Right ventricle myocardium superior (tissue), 1 donor: ENCODE measurements at regions of chr4 and their contacts with region 1.

Region 1: GRCh38 chr4:184538023-184538599 is 63.8 kb upstream of the IRF2 start:
- DNase-seq: peak; percentile 94
- ATAC-seq: peak; percentile 93

Region 2: DNA sequence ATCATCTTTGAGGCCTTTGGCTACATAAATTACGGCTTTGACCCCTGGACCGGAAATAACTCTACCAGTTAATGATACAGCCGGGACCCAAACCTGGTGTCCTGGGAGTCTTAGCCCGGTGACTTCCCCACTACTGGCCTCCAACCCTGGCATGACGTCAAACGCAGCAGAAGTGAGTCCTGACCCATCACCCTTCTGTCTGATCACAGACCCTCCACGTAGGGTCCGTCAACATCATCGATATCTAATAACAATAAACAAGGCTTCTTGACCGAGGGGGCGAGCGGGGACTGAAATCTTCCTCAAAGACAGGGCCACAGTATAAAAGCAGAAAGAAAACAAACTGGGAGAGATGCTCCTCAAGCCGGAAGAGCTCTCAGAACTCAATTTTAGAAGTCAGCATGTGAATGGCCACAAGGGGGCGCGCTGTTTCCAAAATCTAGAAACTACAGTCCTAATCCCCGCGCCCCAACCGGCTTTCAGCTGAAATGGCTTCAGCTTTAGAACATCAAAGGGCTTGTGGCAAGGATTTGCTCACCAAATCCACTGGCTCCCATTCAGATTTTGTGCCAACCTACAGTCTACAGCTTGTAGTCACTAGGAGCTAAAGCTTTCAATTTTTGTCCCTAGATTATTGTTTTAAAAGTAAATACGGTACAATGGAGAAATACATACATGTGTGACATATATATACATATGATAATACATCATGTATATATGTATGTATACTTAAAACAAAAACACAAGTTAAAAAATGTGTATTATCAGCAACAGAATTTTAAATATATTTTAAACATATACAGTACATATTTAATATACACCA is 274.0 kb before region 1 on chr4:
- intact Hi-C with region 1: loop called (anchors 2 kb)
- DNase-seq: peak; percentile 95
- ATAC-seq: peak; percentile 90

Region 3: GRCh38 chr4:184282251-184282713 is 255.8 kb before region 1 on chr4:
- intact Hi-C with region 1: loop called (anchors 5 kb)
- DNase-seq: no peak
- ATAC-seq: peak; percentile 51

Region 4: DNA sequence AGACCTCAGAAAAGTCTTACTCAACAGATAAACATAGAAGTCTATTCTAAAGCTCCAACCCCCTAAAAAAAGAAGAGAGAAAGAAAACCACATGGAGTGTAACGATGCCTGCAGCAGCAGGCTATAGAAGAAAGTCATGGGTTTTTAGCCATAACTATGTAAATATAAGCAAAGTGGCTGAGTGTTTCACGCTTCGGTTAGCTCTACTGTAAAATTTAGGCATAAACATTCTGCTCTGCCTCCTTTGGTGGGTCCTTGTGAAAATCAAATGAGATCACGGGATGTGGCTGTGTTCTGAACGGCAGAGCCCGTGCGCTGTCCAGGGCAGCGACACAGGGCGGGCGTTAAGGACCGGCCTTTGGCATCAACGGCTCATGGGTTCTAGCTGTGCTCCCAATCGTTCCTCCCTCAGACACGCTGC is 142.1 kb before region 1 on chr4:
- intact Hi-C with region 1: loop called (anchors 10 kb)
- DNase-seq: no peak
- ATAC-seq: no peak

Region 5: DNA sequence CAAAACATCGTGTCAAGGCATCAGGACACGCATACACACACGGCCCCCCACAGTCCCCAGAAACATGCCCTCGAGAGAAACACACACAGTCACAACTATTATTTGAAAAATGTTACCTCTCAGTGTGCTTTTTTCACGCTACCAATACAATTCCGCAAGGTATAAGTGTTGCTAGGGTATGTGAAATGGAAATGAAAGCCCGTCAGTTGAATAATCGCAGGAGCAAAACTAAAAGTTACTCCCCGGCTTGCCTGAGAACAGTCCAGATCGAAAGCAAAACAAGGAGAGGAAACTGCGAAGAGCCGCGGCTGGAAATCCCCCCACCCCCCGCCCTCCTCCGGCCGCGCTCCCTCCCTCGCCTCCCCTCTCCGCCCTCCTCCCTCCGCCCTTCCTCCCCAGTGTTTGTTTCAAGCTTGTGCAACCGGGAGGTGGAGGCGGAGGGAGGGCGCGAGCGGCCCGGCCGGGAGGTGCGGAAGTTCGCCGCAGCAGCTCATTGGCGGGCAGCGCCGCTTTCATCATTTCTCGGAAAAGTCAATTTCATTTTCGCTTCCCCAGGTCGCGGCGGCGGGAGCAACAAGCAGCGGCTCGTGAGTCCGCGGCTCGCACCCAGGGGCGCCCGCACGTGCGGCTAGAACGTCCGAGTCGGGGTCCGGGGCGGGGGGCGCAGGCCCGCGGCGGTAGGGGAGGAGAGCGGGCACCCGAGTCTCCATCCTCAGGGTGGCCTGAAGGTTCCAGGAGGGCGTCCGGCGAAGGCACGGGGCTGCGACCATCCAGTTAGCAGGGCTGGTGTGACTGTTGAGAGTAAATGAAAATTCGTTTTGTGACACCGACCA is 63.6 kb before region 1 on chr4 and contains the start of gene IRF2:
- intact Hi-C with region 1: loop called (anchors 5 kb)
- DNase-seq: peak; percentile 98
- ATAC-seq: peak; percentile 91
- total RNA-seq, gene IRF2: 27.2 TPM